ENCODE measurements at regions of chr20 and their contacts with region 1.

Region 1: GRCh38 chr20:47487175-47487917 is 14.3 kb upstream of the NCOA3 start:
- DNase-seq: peak; percentile 72
- H3K4me3 Mint-ChIP-seq: peak overlapping the region; percentile 58
- H3K27ac Mint-ChIP-seq: peak overlapping the region; percentile 98
- H3K4me1 Mint-ChIP-seq: peaks cover 53% of the 10 kb centered on the region
- H3K27me3 Mint-ChIP-seq: no peaks in the 10 kb centered on the region

Region 2: GRCh38 chr20:47356526-47357295 is 130.6 kb before region 1 on chr20 and contains the start of gene ZMYND8:
- CTCF ChIA-PET with region 1: no interaction called
- intact Hi-C with region 1: loop called (anchors 5 kb)
- DNase-seq: peak; percentile 97
- H3K4me3 Mint-ChIP-seq: peak within 1 kb of the TSS; percentile 92
- H3K27ac Mint-ChIP-seq: peak within 1 kb of the TSS; percentile 99
- H3K4me1 Mint-ChIP-seq: peaks cover 52% of the 10 kb centered on the region
- H3K27me3 Mint-ChIP-seq: no peaks in the 10 kb centered on the region
- total RNA-seq, gene ZMYND8: 30.3 to 33.0 TPM

Region 3: DNA sequence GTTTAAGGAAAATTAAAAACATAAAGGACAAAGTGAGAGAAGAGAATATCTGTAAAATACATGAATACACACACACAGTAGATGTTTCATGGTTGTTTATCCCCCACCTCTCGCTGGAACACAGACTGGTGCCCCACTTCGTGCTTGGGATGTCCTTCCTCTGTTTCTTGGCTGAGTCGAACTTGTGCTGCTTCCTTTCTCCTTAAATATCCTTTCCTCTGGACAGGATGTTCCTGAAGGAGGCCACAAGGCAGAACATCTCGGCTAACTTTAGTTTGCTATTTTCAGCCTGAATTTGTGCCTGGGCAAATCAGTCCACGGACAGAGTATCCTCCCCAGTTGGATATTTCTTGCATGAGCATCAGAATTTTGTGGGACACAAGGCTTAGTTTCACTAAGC is 76.2 kb before region 1 on chr20:
- CTCF ChIA-PET with region 1: no interaction called
- intact Hi-C with region 1: loop called (anchors 1 kb)
- DNase-seq: no peak
- H3K4me3 Mint-ChIP-seq: no peak overlapping the region
- H3K27ac Mint-ChIP-seq: no peak overlapping the region
- H3K4me1 Mint-ChIP-seq: peaks cover 29% of the 10 kb centered on the region
- H3K27me3 Mint-ChIP-seq: no peaks in the 10 kb centered on the region

Region 4: DNA sequence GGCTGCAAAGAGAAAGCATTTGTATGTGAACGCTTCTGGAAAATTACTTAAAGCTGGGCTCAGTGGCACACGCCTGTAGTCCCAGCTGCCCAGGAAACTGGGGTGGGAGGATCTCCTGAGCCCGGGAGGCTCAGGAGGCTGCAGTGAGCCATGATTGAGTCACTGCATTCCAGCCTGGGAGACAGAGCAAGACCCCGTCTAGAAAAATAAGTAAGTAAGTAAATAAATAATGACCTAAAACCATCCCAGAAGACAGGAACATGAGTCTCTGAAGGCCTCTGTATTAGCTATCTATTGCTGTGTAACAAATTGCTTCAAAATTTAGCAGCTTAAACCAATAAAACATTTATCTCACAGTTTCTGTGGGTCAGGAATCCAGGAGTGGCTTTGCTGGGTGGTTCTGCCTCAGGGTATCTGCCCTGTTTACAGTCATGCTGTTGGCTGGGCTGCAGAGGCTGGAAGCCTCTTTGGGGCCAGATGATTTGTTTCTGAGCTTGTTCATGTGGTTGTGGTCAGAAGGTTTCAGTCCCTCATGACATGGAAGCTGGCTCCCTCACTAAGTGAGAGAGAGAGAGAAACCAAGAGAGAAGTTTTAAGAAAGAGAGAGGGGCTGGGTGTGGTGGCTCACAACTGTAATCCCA is 34.1 kb before region 1 on chr20:
- CTCF ChIA-PET with region 1: interaction called, 4 read pairs
- intact Hi-C with region 1: loop called (anchors 1 kb)
- DNase-seq: peak; percentile 62
- H3K4me3 Mint-ChIP-seq: no peak overlapping the region
- H3K27ac Mint-ChIP-seq: peak overlapping the region; percentile 51
- H3K4me1 Mint-ChIP-seq: peaks cover 45% of the 10 kb centered on the region
- H3K27me3 Mint-ChIP-seq: no peaks in the 10 kb centered on the region

Region 5: DNA sequence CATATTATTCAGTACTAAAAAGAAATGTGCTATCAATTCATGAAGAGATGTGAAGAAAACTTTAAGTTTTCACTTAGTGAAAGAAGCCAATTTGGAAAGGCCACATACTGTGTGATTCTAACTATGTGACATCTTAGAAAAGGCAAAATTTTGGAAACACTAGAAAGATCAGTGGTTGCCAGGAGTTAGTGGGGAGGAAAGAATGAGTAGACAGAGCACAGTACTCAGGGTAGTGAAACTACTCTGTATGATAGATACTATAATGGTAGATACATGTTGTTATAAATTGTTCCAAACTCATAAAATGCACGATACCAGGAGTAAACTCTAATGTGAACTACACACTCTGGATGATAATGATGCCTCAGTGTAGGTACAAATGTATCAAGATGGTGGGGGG is 28.5 kb after region 1 on chr20:
- CTCF ChIA-PET with region 1: no interaction called
- intact Hi-C with region 1: loop called (anchors 1 kb)
- DNase-seq: no peak
- H3K4me3 Mint-ChIP-seq: no peak overlapping the region
- H3K27ac Mint-ChIP-seq: peak overlapping the region; percentile 76
- H3K4me1 Mint-ChIP-seq: peaks cover 64% of the 10 kb centered on the region
- H3K27me3 Mint-ChIP-seq: no peaks in the 10 kb centered on the region

Region 6: GRCh38 chr20:47540443-47541354 is 53.4 kb after region 1 on chr20:
- CTCF ChIA-PET with region 1: interaction called, 3 read pairs
- intact Hi-C with region 1: loop called (anchors 1 kb)
- DNase-seq: peak; percentile 38
- H3K4me3 Mint-ChIP-seq: no peak overlapping the region
- H3K27ac Mint-ChIP-seq: peak overlapping the region; percentile 50
- H3K4me1 Mint-ChIP-seq: peaks cover 77% of the 10 kb centered on the region
- H3K27me3 Mint-ChIP-seq: no peaks in the 10 kb centered on the region

Region 7: DNA sequence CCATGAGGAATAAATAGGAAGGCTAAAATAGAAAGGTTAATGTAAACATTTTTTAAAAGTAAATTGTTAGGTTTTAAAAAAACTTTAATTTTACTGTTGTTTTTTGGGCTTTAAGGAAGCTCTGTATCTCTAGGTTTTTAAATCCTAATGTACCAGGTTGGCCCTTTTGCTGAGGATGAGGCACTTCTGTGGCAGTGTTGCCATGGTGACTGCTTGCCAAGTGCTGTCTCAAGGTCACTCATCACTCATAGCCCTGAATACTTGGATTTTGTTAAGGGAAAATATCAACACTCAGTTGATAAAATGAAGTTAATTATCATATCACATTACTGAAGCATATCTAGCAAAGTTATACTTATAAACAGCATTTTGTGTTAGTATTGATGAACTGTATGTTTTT is 64.5 kb after region 1 on chr20:
- CTCF ChIA-PET with region 1: no interaction called
- intact Hi-C with region 1: no loop called
- DNase-seq: peak; percentile 27
- H3K4me3 Mint-ChIP-seq: no peak overlapping the region
- H3K27ac Mint-ChIP-seq: no peak overlapping the region
- H3K4me1 Mint-ChIP-seq: peaks cover 41% of the 10 kb centered on the region
- H3K27me3 Mint-ChIP-seq: no peaks in the 10 kb centered on the region

Region 8: GRCh38 chr20:47610247-47610944 is 123.0 kb after region 1 on chr20:
- CTCF ChIA-PET with region 1: interaction called, 4 read pairs
- intact Hi-C with region 1: loop called (anchors 1 kb)
- DNase-seq: peak; percentile 97
- H3K4me3 Mint-ChIP-seq: peak overlapping the region; percentile 48
- H3K27ac Mint-ChIP-seq: peak overlapping the region; percentile 96
- H3K4me1 Mint-ChIP-seq: peaks cover 86% of the 10 kb centered on the region
- H3K27me3 Mint-ChIP-seq: no peaks in the 10 kb centered on the region